Lower leg skin (tissue), 4 donors: ENCODE measurements at regions of chr13 and their contacts with region 1.

Region 1: GRCh38 chr13:50801087-50801931 is 42.2 kb downstream of the DLEU7 start:
- DNase-seq: peak in 1 of 2 donors; percentile 30
- H3K4me3 ChIP-seq: no peak overlapping the region
- CTCF ChIP-seq: no peak
- POLR2A ChIP-seq: no peak

Region 2: DNA sequence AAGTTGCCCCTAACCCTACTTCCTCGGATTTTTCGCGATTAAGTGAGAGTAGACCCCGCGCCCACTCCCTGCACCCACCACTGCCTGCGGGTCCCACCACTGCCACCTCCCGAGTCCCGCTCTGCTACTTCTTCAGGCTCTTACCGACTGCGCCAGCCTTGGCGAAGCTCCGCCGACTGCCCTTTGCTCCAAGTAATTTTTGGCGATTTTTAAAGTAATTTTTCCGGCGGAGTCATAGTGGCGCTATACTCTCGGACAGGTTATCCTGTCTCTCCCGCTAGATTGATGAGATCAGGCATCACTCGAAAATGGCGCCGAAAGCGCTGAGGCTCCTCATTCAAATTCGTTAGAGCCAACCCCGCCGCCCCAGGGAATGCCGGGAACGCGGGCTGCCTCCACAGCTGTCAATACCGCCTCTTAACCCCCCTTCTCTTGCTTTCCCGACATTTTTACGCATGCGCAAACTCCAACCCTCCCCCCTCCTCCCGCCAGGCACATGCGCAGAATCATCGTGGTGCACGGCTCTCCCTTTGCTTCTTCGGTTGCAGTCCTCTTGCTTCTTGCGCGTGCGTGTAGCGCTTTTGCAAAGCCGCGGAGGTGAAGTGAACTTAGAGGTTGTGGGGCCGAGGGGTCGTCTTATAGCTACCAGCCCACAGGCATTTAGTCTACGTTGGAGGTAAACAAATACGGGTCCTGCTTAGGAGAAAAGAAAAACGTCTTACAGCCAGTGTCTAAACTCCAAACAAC is 719.5 kb before region 1 on chr13:
- intact Hi-C with region 1: loop called (anchors 5 kb)
- DNase-seq: peak; percentile 98 to 99
- H3K4me3 ChIP-seq: peak overlapping the region; percentile 72
- CTCF ChIP-seq: no peak
- POLR2A ChIP-seq: no peak

Region 3: GRCh38 chr13:50198508-50198907 is 602.8 kb before region 1 on chr13:
- intact Hi-C with region 1: no loop called
- DNase-seq: no peak
- H3K4me3 ChIP-seq: no peak overlapping the region
- CTCF ChIP-seq: no peak
- POLR2A ChIP-seq: no peak